Activated CD4-positive, alpha-beta T cell treated with anti-CD3 and anti-CD28 coated beads for 36 hours (primary cell): ENCODE measurements at regions of chr7 and their contacts with region 1.

Region 1: DNA sequence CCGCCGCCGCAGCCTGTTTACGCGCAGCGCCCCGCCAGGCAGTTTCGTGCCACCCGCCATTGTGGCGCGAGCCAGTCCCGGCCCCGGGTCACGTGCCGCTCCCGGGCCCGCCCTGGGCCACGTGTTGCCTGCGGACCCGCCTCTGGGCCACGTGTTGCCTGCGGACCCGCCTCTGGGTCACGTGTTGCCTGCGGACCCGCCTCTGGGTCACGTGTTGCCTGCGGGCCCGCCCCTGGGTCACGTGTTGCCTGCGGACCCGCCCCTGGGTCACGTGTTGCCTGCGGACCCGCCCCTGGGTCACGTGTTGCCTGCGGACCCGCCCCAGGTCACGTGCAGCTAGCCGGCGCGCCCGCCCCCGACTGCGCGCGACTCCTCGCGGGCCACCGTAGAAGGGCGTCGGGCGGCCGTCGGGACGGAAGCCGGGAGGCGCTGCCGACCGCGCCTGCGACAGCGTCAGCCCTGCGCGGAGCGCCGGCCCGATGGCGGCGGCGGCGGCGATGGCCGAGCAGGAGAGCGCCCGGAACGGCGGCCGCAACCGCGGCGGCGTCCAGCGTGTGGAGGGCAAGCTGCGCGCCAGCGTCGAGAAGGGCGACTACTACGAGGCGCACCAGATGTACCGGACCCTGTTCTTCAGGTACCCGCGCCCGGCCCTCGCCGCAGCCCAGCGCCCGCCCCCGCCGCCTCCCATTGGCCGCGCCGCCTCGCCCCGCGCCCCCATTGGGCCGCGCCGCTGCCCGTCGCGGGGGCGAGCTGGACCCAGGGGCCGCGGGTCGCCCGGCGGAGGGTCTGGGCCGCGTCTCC is at the start of gene GET4:
- DNase-seq: peak; percentile 96
- ATAC-seq: peak; percentile 79
- H3K4me3 Mint-ChIP-seq: peak within 1 kb of the TSS; percentile 92
- H3K27ac Mint-ChIP-seq: peak within 1 kb of the TSS; percentile 87
- H3K4me1 Mint-ChIP-seq: peaks cover 27% of the 10 kb centered on the region
- H3K27me3 Mint-ChIP-seq: no peaks in the 10 kb centered on the region
- total RNA-seq, gene GET4: 17.7 to 29.7 TPM

Region 2: GRCh38 chr7:362402-363096 is 513.8 kb before region 1 on chr7:
- CTCF ChIA-PET with region 1: no interaction called
- POLR2A ChIA-PET with region 1: no interaction called
- intact Hi-C with region 1: loop called in 1 of 2 experiments (anchors 1 kb)
- DNase-seq: peak; percentile 67
- ATAC-seq: peak; percentile 65
- H3K4me3 Mint-ChIP-seq: peak overlapping the region; percentile 62
- H3K27ac Mint-ChIP-seq: peak overlapping the region; percentile 90
- H3K4me1 Mint-ChIP-seq: peaks cover 67% of the 10 kb centered on the region
- H3K27me3 Mint-ChIP-seq: no peaks in the 10 kb centered on the region

Region 3: DNA sequence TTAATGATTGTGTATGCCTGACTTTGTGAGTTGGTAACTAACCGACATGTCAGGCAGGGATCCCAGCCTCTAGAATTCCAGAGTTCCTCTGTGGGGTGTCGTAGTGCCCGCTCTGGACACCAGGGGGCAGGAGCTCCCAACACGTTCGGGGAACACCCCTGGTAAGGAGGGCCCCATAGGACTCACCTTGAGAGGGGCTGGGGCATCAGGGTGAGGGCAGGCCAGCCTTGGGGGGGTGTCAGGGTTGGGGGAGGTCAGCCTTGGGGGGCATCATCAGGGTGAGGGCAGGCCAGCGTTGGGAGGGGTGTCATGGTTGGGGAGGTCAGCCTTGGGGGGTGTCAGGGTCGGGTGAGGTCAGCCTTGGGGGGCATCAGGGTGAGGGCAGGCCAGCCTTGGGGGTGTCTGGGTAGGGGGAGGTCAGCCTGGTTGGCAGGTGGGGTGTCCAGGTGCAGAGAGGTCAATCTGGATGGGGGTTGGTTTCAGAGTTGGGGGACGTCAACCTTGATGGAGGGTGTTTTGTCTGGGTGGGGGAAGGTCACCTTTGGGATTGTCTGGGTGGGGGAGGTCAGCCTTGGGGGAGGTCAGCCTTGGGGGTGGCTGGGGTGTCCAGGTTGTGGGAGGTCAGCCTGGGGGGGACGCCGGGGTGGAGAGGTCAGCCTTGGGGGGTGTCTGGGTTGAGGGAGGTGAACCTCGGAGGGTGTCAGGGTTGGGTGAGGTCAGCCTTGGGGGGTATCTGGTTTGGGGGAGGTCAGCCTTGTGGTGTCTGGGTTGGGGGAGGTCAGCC is 89.7 kb before region 1 on chr7:
- CTCF ChIA-PET with region 1: interaction called, 15 read pairs
- POLR2A ChIA-PET with region 1: no interaction called
- intact Hi-C with region 1: loop called (anchors 1 kb)
- DNase-seq: peak; percentile 84
- ATAC-seq: peak; percentile 91
- H3K4me3 Mint-ChIP-seq: no peak overlapping the region
- H3K27ac Mint-ChIP-seq: no peak overlapping the region
- H3K4me1 Mint-ChIP-seq: no peaks in the 10 kb centered on the region
- H3K27me3 Mint-ChIP-seq: no peaks in the 10 kb centered on the region

Region 4: DNA sequence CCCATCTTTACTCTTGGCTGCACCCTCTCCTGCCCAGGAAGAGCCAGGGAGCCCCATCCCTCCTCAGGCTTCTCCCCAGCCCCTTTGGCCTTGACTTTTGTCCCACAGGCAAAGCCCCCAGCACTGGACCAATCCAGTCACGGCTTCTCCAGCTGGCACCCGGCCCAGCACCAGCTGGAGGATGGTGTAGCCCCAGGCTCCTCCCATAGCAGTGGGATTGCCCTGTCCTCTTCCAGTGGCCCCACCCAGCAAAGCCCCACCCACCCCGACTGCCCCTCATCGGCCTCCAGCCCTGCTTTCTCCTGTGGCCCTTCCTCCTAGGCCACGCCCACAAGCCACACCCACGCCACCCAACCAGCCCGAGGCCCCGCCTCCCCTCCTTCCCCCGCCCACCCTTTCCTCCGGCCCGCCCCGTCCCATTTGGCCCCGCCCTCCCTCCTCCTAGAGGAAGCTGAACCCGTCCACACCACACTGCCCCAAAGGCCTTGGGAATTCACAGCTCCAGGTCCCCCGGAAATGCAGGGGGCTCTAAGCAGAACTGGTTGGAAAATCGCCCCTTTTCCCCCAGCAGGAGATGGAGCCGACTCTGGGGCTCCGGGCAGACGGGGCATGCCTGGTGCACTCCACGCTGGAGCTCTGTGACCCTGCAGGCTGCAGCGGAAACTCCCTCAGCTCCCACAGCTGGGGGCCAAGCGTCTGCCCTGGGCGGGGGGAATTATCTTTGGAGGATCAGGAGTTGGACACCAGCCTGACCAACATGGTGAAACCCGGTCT is 25.2 kb after region 1 on chr7:
- CTCF ChIA-PET with region 1: no interaction called
- POLR2A ChIA-PET with region 1: no interaction called
- intact Hi-C with region 1: loop called in 1 of 2 experiments (anchors 1 kb)
- DNase-seq: peak; percentile 81
- ATAC-seq: peak; percentile 64
- H3K4me3 Mint-ChIP-seq: no peak overlapping the region
- H3K27ac Mint-ChIP-seq: no peak overlapping the region
- H3K4me1 Mint-ChIP-seq: no peaks in the 10 kb centered on the region
- H3K27me3 Mint-ChIP-seq: no peaks in the 10 kb centered on the region

Region 5: DNA sequence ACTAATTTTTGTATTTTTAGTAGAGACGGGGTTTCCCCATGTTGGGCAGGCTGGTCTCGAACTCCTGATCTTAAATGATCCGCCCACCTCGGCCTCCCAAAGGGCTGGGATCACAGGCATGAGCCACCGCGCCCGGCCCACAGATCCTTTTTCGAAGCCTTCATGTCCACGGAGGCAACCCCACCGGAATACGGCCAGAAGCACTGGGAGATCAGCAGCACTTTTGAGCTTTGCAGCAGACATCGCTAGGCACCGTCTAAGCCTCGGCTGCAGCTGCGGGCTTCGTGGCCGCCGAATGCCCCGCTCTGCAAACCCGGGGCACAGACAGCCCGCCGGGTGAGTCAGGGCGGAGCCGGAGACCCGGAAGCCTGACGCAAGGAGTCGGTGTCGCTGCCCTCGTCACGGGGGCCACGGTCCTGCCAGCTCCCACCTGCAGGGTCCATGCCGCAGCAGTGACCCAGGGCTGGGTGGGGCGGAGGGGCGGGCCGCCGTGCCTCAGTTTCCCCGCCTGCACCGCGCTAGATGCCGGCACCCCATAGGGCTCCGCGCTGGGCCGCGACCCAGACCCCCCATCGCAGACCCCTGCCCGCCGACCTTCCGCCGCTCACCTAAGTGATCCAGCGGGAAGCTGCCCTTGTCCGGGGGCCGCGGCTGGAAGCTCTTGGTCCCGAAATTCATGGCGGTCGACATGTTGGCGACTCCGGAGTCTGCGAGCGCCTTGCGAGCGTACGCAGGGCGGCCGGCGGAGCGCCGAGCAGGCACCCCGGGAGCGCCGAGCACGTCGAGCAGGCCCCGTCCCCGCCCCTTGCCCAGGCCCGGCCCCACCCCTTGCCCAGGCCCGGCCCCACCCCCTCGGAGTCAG is 98.7 kb after region 1 on chr7 and contains the start of gene COX19:
- CTCF ChIA-PET with region 1: interaction called, 3 read pairs
- POLR2A ChIA-PET with region 1: no interaction called
- intact Hi-C with region 1: loop called in 1 of 2 experiments (anchors 1 kb)
- DNase-seq: peak; percentile 96
- ATAC-seq: peak; percentile 93
- H3K4me3 Mint-ChIP-seq: peak within 1 kb of the TSS; percentile 94
- H3K27ac Mint-ChIP-seq: peak within 1 kb of the TSS; percentile 94
- H3K4me1 Mint-ChIP-seq: peaks cover 30% of the 10 kb centered on the region
- H3K27me3 Mint-ChIP-seq: no peaks in the 10 kb centered on the region
- total RNA-seq, gene COX19: 11.3 to 14.6 TPM

Region 6: GRCh38 chr7:1137510-1138167 is 261.3 kb after region 1 on chr7:
- CTCF ChIA-PET with region 1: no interaction called
- POLR2A ChIA-PET with region 1: no interaction called
- intact Hi-C with region 1: loop called in 1 of 2 experiments (anchors 1 kb)
- DNase-seq: no peak
- ATAC-seq: peak; percentile 54
- H3K4me3 Mint-ChIP-seq: peak overlapping the region; percentile 75
- H3K27ac Mint-ChIP-seq: peak overlapping the region; percentile 69
- H3K4me1 Mint-ChIP-seq: peaks cover 21% of the 10 kb centered on the region
- H3K27me3 Mint-ChIP-seq: no peaks in the 10 kb centered on the region

Region 7: DNA sequence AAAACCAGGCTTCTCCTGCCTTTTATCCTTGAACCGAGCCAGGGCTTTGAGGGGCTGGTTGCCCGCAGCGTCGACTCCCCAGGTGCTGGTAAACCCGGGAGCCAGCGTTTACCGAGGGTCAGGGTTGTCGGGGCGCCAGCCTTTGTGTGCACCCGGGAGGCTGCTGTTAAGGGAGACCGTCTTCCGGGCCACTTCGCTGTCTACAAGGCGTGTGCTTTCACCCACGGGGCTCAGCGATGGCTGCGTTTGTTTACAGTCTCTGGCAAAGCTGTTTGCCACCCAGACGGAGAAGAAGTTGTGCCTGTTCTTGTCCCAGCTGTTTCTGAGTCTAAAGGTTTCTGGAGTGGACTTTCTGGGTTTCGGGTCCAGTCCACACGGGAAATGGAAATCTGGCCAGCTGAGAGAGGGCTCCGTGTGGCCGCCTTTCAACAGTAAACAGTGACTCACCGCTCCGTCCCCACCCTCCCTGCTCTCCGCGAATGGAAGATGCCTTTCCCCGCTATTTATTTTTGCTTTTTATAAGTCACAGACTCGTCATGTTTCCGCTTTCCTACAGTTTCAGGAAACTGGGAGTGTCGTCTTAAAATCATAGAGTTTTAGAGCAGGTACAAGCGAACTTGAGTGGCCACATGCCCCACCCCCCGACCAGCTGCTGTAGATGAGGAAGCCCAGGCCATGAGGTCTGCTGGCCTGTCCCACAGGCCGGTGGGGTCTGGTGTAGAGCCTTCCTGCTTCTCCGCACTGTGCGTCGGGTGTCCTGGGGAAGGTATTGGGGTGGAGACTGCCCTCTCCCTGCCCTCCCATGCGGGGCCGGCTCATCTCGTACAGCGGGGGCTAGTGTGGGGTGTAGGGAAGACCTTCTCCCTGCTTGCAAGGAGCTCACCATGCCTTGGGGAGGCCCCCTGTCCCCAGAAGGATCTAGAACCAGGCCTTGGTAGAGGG is 656.4 kb after region 1 on chr7:
- CTCF ChIA-PET with region 1: no interaction called
- POLR2A ChIA-PET with region 1: no interaction called
- intact Hi-C with region 1: loop called in 1 of 2 experiments (anchors 10 kb)
- DNase-seq: peak; percentile 78
- ATAC-seq: peak; percentile 65
- H3K4me3 Mint-ChIP-seq: peak overlapping the region; percentile 89
- H3K27ac Mint-ChIP-seq: peak overlapping the region; percentile 89
- H3K4me1 Mint-ChIP-seq: peaks cover 27% of the 10 kb centered on the region
- H3K27me3 Mint-ChIP-seq: no peaks in the 10 kb centered on the region